ENCODE measurements at regions of chr2 and their contacts with region 1.

Region 1: DNA sequence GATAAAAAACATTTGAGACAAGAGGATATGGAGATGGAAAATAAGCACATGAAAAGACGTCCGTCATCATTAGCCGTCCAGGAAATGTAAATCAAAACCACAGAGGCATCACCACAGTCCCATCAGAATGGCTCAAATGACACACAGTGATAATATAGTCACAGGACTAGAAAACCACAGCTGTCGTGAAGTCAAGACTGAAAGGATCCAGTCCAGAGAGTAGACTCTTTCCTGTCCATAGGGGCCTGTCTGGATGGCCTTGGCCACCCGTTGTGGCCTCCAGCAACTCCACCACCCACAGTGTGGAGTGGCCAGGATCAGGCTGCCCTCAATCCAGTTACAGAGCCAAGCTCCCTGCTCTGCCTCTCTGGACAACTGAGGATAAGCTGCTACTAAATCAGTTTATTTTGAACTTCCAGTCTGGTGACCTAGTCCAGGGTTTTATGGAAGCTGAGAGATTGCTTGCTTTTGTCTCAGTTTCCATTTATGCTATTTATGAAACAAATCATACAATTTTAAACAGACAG is 60.4 kb downstream of the RHOB start:
- DNase-seq: peak in 1 of 5 donors; percentile 30
- ATAC-seq: peak in 1 of 4 donors; percentile 27
- H3K4me3 ChIP-seq: no peak overlapping the region
- H3K27ac ChIP-seq: no peak overlapping the region
- H3K4me1 ChIP-seq: peaks cover 0 to 6% (median 0%) of the 10 kb centered on the region in 12 donors
- H3K27me3 ChIP-seq: no peaks in the 10 kb centered on the region
- CTCF ChIP-seq: no peak
- POLR2A ChIP-seq: no peak

Region 2: DNA sequence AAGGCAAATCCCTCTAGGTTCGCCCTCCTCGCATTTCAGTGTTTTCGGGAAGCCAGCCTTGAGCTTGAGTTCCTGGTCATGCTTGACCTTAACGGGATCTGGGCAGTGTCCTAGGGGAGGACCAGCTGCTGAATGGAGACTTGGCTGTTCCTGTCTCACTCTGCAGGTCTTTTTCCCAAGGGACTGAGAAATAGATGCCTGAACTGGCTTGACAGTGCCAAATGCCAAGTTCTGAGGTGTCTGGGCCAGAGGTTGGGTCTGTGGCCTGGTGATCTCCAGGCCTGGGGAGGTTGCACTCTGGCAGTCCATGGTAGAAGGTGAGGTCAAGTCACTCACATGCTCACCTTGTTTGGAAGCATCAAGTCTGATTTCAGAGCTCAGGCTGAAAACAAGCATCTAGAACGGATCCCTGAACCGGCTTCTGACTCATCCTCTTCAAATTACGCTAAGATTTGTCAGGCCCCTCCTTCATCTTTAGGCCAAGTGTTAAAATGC is 40.8 kb before region 1 on chr2:
- intact Hi-C with region 1: loop called in 1 of 10 experiments (anchors 5 kb)
- DNase-seq: peak in 2 of 5 donors; percentile 18 to 20
- ATAC-seq: no peak
- H3K4me3 ChIP-seq: no peak overlapping the region
- H3K27ac ChIP-seq: peak overlapping the region in 1 of 12 donors; percentile 48
- H3K4me1 ChIP-seq: peaks cover 0 to 5% (median 0%) of the 10 kb centered on the region in 12 donors
- H3K27me3 ChIP-seq: no peaks in the 10 kb centered on the region
- CTCF ChIP-seq: no peak
- POLR2A ChIP-seq: no peak

Region 3: DNA sequence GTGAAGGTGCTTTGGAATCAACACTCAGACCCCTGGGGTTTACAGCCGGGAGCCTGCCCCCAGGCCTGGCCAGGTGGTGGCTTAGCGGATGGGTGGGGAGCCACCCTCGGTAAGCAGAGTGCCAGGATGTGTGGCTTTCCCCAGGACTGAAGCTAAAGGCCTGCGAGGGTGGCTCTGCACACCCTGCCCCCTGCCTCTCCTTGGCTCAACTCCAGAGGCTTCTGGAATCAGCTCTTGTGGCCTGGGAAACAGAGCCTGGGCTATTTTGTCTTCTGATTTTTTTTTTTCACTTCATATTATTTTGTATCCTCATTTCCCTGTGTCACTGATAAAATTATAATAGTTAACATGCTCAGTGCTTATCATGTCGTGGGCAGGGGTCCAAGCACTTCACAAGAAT is 19.5 kb after region 1 on chr2:
- intact Hi-C with region 1: no loop called
- DNase-seq: peak in 3 of 5 donors; percentile 42 to 66 (median 60)
- ATAC-seq: peak in 1 of 4 donors; percentile 4
- H3K4me3 ChIP-seq: no peak overlapping the region
- H3K27ac ChIP-seq: peak overlapping the region in 11 of 12 donors; percentile 19 to 76 (median 65)
- H3K4me1 ChIP-seq: peaks cover 4 to 79% (median 52%) of the 10 kb centered on the region in 12 donors
- H3K27me3 ChIP-seq: no peaks in the 10 kb centered on the region
- CTCF ChIP-seq: no peak
- POLR2A ChIP-seq: no peak

Region 4: GRCh38 chr2:20561701-20562454 is 54.6 kb after region 1 on chr2:
- intact Hi-C with region 1: no loop called
- DNase-seq: peak in 1 of 5 donors; percentile 7
- ATAC-seq: no peak
- H3K4me3 ChIP-seq: no peak overlapping the region
- H3K27ac ChIP-seq: no peak overlapping the region
- H3K4me1 ChIP-seq: peaks cover 0 to 15% (median 4%) of the 10 kb centered on the region in 12 donors
- H3K27me3 ChIP-seq: no peaks in the 10 kb centered on the region
- CTCF ChIP-seq: no peak
- POLR2A ChIP-seq: no peak

Measured in heart left ventricle (tissue), 16 donors.